ENCODE measurements at regions of chr10 and their contacts with region 1.

Region 1: GRCh38 chr10:48656241-48656913 is 28.3 kb upstream of the WDFY4 start:
- DNase-seq: peak; percentile 94 to 99 (median 96)
- ATAC-seq: peak; percentile 97
- H3K4me3 ChIP-seq: peak overlapping the region; percentile 45
- H3K27ac ChIP-seq: no peak overlapping the region
- H3K4me1 ChIP-seq: peaks cover 10 to 24% of the 10 kb centered on the region in 2 experiments; a peak in 4 of 5 replicates
- H3K27me3 ChIP-seq: peaks cover 2 to 39% of the 10 kb centered on the region in 2 experiments; a peak in 3 of 5 replicates
- CTCF ChIP-seq: peak; percentile 97 to 99 (median 99)
- EP300 ChIP-seq: 0 out of 2 replicates have a peak, but pooled peaks have one; percentile 15
- POLR2A ChIP-seq: no peak
- RAD21 ChIP-seq: peak; percentile 97

Region 2: GRCh38 chr10:48215488-48216204 is 440.7 kb before region 1 on chr10:
- CTCF ChIA-PET with region 1: interaction called, 12 read pairs
- POLR2A ChIA-PET with region 1: no interaction called
- in situ Hi-C with region 1: no loop called
- intact Hi-C with region 1: no loop called
- DNase-seq: peak; percentile 60 to 79 (median 75)
- ATAC-seq: peak; percentile 98
- H3K4me3 ChIP-seq: no peak overlapping the region
- H3K27ac ChIP-seq: no peak overlapping the region
- H3K4me1 ChIP-seq: no peaks in the 10 kb centered on the region
- H3K27me3 ChIP-seq: peaks cover 0 to 12% of the 10 kb centered on the region in 2 experiments; a peak in 3 of 5 replicates
- CTCF ChIP-seq: peak; percentile 88 to 92 (median 91)
- EP300 ChIP-seq: no peak
- POLR2A ChIP-seq: no peak
- RAD21 ChIP-seq: peak; percentile 44 to 80; a peak in 3 of 4 replicates

Region 3: DNA sequence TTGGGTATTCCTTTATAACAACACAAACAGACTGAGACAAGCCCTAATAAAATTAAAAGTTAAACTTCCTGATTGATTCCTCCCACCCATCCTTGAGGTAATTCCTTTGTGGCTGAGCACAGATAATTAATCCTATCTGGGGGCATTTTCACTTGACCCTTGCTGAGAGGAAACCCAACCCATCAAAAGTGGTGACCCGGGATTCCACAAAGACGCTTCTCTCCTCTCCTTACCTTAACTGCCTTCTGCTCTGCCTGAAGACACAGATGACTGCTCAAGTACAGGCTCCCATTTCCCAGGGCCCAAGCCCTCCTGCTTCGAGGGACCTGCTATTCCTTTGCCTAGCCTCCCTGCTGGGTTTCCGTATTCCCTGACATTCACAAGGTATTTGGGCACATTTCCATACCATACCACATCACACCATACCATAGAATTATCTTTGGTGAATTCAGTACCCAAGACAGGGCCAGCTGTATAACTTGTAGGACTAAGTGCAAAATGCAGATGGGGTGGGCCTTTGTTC is 359.7 kb before region 1 on chr10:
- CTCF ChIA-PET with region 1: no interaction called
- POLR2A ChIA-PET with region 1: no interaction called
- in situ Hi-C with region 1: no loop called
- intact Hi-C with region 1: no loop called
- DNase-seq: no peak
- ATAC-seq: no peak
- H3K4me3 ChIP-seq: no peak overlapping the region
- H3K27ac ChIP-seq: no peak overlapping the region
- H3K4me1 ChIP-seq: peaks cover 0 to under 1% of the 10 kb centered on the region in 2 experiments; a peak in 3 of 5 replicates
- H3K27me3 ChIP-seq: no peaks in the 10 kb centered on the region
- CTCF ChIP-seq: no peak
- EP300 ChIP-seq: no peak
- POLR2A ChIP-seq: no peak
- RAD21 ChIP-seq: no peak

Region 4: GRCh38 chr10:48470115-48470892 is 186.1 kb before region 1 on chr10:
- CTCF ChIA-PET with region 1: no interaction called
- POLR2A ChIA-PET with region 1: no interaction called
- in situ Hi-C with region 1: no loop called
- intact Hi-C with region 1: no loop called
- DNase-seq: peak; percentile 70 to 99 (median 85)
- ATAC-seq: peak; percentile 88
- H3K4me3 ChIP-seq: no peak overlapping the region
- H3K27ac ChIP-seq: peak overlapping the region; percentile 100
- H3K4me1 ChIP-seq: peaks cover 69 to 71% of the 10 kb centered on the region in 2 experiments
- H3K27me3 ChIP-seq: no peaks in the 10 kb centered on the region; a peak in 1 of 5 replicates
- CTCF ChIP-seq: peak in 1 of 3 experiments; percentile 9; a peak in 1 of 6 replicates
- EP300 ChIP-seq: peak; percentile 100
- POLR2A ChIP-seq: peak; percentile 79
- RAD21 ChIP-seq: peak; percentile 45 to 63; a peak in 3 of 4 replicates

Region 5: DNA sequence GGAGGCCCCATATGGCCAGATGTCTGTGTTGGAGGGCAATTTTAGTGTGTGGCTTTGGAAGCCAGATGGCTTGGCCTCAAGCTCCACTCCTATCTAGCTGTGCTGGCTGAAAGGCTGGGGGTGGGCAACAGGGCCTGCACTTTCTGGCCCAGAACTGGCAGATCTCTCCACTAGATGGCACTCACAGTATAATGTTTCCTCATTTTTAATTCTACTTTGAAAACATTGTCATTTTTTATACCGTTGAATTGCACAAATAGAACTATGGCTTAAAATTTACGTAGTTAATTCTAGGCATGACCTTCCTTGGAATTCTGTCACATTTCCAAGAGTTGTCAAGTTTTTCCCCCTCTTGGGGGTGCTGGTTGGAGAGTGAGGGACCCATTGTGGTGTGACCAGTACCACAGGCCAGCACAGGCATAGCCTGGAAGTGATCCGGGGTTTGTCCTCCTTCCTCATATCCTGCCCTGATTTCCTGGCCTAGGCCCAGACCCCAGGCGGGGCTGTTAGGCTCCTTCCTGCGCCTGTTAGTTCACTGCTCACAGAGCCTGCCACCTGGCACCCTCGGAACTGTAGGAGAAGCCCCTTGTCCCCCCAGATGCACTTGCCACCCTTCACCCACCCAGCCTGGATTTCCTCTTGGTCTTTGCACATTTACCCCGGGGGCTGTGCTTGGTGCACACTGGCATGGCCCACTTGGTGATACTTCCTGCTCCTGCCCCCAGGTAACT is 104.4 kb before region 1 on chr10:
- CTCF ChIA-PET with region 1: interaction called, 46 read pairs
- POLR2A ChIA-PET with region 1: interaction called, 3 read pairs
- in situ Hi-C with region 1: loop called (anchors 5 kb)
- intact Hi-C with region 1: loop called (anchors 2 kb)
- DNase-seq: peak; percentile 44 to 73 (median 64)
- ATAC-seq: peak; percentile 81
- H3K4me3 ChIP-seq: no peak overlapping the region
- H3K27ac ChIP-seq: no peak overlapping the region
- H3K4me1 ChIP-seq: no peaks in the 10 kb centered on the region
- H3K27me3 ChIP-seq: peaks cover 16 to 43% of the 10 kb centered on the region in 2 experiments; a peak in 4 of 5 replicates
- CTCF ChIP-seq: peak; percentile 74 to 86 (median 77)
- EP300 ChIP-seq: no peak
- POLR2A ChIP-seq: no peak
- RAD21 ChIP-seq: peak; percentile 64 to 74

Region 6: GRCh38 chr10:48821692-48822091 is 165.3 kb after region 1 on chr10:
- CTCF ChIA-PET with region 1: interaction called, 45 read pairs
- POLR2A ChIA-PET with region 1: no interaction called
- in situ Hi-C with region 1: no loop called
- intact Hi-C with region 1: loop called (anchors 1 kb)
- DNase-seq: no peak
- ATAC-seq: peak; percentile 33; the same call in 2 of the 3 replicates
- H3K4me3 ChIP-seq: no peak overlapping the region
- H3K27ac ChIP-seq: no peak overlapping the region
- H3K4me1 ChIP-seq: no peaks in the 10 kb centered on the region
- H3K27me3 ChIP-seq: peaks cover 16 to 59% of the 10 kb centered on the region in 2 experiments; a peak in 4 of 5 replicates
- CTCF ChIP-seq: no peak
- EP300 ChIP-seq: no peak
- POLR2A ChIP-seq: no peak
- RAD21 ChIP-seq: no peak

Region 7: DNA sequence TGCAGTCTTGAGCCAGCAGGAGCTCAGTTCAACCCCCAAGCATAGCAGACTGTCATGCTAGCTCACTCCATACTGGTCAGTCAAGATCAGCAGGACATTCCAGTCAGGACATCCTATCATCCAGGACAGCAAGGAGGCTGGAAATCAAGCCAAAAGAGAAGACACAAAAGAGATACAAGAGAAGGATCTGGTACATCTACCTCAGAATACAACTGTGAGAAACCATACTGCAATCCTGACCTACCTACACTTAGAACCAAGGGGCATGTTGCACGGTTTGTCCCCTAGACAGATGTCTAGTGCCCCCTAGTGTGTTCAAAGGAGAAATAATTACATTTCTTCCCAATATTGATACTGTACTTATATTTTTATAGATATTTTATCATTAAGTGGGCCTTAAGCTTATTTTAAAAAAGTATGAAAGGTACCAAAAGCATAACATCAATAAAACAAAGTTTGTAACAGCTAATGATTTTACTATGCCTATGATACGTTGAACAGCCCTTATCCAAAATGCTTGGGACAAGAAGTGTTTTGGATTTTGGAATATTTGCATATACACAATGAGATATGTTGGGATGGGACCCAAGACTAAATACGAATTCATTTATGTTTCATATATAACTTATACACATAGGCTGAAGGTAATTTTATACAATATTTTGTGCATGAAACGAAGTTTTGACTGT is 855.9 kb after region 1 on chr10:
- CTCF ChIA-PET with region 1: interaction called, 20 read pairs
- POLR2A ChIA-PET with region 1: no interaction called
- in situ Hi-C with region 1: loop called (anchors 10 kb)
- intact Hi-C with region 1: loop called (anchors 1 kb)
- DNase-seq: peak in 3 of 4 experiments; percentile 44 to 51 (median 46)
- ATAC-seq: peak; percentile 92
- H3K4me3 ChIP-seq: no peak overlapping the region
- H3K27ac ChIP-seq: no peak overlapping the region
- H3K4me1 ChIP-seq: no peaks in the 10 kb centered on the region
- H3K27me3 ChIP-seq: no peaks in the 10 kb centered on the region
- CTCF ChIP-seq: peak; percentile 73 to 92 (median 75)
- EP300 ChIP-seq: no peak
- POLR2A ChIP-seq: no peak
- RAD21 ChIP-seq: peak; percentile 87 to 88

Measured in K562 (cell line).